ENCODE measurements at regions of chr14 and their contacts with region 1.

Region 1: GRCh38 chr14:65824285-65824977 is 411.9 kb downstream of the FUT8 start:
- DNase-seq: peak; percentile 75
- CTCF ChIP-seq: peak; percentile 83

Region 2: GRCh38 chr14:65170768-65171507 is 653.5 kb before region 1 on chr14:
- CTCF ChIA-PET with region 1: interaction called, 56 read pairs
- POLR2A ChIA-PET with region 1: no interaction called
- DNase-seq: no peak
- CTCF ChIP-seq: peak; percentile 56

Region 3: GRCh38 chr14:65412032-65412846 is 412.2 kb before region 1 on chr14 and contains the start of gene FUT8:
- CTCF ChIA-PET with region 1: interaction called, 71 read pairs
- POLR2A ChIA-PET with region 1: no interaction called
- DNase-seq: peak; percentile 85
- CTCF ChIP-seq: peak; percentile 55

Region 4: DNA sequence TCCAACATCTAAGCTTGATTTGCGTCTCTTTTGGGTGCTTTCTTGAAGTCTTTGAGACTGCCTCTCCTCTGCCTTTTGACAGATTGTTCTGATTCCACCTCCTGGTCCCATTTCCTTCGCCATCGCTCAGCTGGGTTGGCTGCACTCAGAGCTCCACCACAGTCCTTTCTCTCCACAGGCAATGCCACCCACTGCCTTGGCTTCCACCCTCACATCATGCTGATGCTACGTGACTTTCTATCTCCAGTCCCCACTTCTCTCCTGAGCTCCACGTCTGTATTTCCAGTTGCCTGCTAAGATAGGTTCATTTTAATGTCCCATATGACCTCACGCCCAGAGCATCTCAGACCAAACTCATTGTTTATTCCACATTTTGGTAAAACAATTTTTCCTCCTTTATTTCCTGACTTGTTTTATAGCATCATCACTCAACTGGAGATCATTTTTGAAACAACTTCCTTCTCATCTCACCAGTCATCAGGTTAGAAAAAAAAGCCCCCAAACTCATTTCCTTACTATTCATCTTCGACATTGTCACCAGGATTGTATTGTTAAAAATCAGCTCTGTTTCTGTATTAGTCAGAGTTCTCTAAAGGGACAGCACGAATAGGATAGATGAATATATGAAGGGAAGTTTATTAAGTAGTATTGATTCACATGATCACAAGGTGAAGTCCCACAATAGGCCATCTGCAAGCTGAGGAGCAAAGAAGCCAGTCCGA is 19.5 kb before region 1 on chr14:
- CTCF ChIA-PET with region 1: interaction called, 59 read pairs
- POLR2A ChIA-PET with region 1: no interaction called
- DNase-seq: no peak
- CTCF ChIP-seq: no peak

Region 5: GRCh38 chr14:65840118-65840751 is 15.8 kb after region 1 on chr14:
- CTCF ChIA-PET with region 1: interaction called, 27 read pairs
- POLR2A ChIA-PET with region 1: no interaction called
- DNase-seq: no peak
- CTCF ChIP-seq: no peak

Measured in GM10248 (cell line).